ENCODE measurements at regions of chr1 and their contacts with region 1.

Region 1: DNA sequence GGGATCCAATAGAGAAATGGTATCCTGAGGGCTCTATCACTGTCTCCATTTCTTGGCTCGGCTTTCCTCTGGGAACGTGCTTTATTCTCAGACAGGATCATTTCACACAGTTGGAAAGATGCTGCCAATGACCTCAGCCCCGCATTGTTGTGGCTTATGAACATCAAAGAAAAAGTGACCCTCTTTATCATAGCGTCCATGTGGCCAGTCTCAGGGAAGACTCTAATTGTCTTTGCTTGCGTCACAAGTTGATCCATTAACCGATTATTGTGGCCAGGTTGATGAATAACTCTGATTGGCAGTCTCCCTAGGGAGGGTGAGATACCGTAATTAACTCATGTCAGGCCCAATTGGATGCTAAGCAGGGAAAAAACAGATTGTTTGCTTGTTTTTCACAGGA is 10.4 kb upstream of the TMEM9 start:
- DNase-seq: no peak
- H3K4me3 Mint-ChIP-seq: no peak overlapping the region
- H3K27ac Mint-ChIP-seq: no peak overlapping the region
- H3K4me1 Mint-ChIP-seq: peaks cover 4% of the 10 kb centered on the region
- H3K27me3 Mint-ChIP-seq: no peaks in the 10 kb centered on the region
- CTCF ChIP-seq: no peak

Region 2: DNA sequence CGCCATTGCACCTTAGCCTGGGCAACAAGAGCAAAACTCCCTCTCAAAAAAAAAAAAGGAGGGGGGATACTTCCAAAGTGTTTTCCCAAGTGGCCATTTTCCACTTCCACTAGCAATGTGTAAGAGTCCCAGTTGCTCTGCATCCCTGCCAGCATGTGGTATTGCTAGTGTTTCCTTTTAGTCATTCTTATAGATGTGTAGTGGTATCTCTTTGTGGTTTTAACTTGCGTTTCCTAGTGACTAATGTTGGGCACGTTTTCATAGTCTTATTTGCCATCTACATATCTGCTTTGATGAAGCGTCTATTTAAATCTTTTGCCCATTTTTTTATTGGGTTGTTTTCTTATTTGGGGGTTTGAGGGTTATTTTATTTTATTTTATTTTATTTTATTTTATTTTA is 238.8 kb before region 1 on chr1:
- CTCF ChIA-PET with region 1: interaction called, 10 read pairs
- POLR2A ChIA-PET with region 1: no interaction called
- intact Hi-C with region 1: no loop called
- DNase-seq: peak; percentile 74
- H3K4me3 Mint-ChIP-seq: no peak overlapping the region
- H3K27ac Mint-ChIP-seq: no peak overlapping the region
- H3K4me1 Mint-ChIP-seq: peaks cover 6% of the 10 kb centered on the region
- H3K27me3 Mint-ChIP-seq: no peaks in the 10 kb centered on the region
- CTCF ChIP-seq: no peak